Right ventricle myocardium inferior (tissue), 1 donor: ENCODE measurements at regions of chr17 and their contacts with region 1.

Region 1: DNA sequence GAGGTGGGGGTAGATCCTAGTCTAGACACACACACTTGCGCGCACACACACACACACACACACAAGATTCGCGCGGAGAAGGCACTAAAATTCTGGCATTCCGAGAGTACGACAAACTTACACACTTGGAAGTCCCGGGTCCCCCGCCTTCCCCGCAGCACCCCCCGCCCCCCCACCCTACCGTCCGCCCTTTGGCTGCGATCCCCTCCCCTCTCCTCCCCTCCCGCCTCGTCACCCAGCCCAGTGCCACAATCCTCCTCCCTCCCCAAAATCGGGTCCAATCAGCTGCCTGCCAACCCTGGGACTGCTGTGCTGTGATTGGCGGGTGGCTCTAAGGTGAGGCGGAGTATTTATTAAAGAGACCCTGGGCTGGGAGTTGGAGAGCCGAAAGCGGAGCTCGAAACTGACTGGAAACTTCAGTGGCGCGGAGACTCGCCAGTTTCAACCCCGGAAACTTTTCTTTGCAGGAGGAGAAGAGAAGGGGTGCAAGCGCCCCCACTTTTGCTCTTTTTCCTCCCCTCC is at the start of gene SOX9:
- DNase-seq: peak; percentile 90
- ATAC-seq: peak; percentile 93
- total RNA-seq, gene SOX9: 13.8 TPM

Region 2: DNA sequence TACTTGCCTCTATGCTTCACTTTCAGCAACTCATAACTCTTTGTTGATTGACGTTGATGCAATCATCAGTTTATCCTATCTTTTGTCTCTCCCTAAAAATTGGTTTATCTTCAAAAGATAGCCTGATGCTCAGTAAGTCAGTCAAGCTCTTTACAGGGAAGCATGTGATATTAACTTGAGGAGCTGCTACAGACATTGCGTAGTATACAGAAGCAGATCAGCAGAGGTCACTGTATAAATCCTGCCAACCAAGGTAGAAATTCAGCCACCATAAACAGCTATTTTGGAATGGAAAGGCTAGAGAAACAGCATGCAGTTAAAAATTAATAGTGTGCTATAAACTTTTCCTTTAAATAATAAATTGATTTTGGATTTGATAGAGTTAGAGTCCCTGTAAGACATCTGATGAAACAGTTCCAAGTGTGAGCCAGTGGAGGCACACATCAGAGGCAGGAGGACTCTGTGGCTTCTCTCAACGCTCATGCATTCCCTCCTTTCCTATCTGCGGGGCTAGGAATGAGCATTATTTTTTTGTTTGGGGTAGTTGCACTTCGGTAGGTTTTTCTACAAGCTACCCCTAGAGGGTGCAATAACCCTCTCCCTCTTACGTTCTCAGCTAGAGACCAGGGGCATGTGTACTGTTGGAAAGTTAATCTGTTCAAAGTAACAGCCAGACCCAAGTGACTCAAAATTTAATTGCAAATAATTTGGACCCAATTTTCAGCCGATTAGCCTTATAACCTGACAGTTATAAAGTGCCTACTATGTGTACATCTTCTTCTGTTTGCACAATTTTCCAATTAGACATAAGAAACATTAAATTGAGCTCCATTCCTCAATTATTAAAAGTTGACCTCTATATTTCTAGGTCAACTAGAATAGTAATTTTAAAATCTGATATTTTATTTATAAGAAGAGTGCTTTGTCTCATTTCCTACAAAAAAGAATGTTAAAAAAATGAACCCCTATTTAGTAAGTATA is 647.6 kb before region 1 on chr17:
- intact Hi-C with region 1: loop called (anchors 2 kb)
- DNase-seq: no peak
- ATAC-seq: peak; percentile 52

Region 3: DNA sequence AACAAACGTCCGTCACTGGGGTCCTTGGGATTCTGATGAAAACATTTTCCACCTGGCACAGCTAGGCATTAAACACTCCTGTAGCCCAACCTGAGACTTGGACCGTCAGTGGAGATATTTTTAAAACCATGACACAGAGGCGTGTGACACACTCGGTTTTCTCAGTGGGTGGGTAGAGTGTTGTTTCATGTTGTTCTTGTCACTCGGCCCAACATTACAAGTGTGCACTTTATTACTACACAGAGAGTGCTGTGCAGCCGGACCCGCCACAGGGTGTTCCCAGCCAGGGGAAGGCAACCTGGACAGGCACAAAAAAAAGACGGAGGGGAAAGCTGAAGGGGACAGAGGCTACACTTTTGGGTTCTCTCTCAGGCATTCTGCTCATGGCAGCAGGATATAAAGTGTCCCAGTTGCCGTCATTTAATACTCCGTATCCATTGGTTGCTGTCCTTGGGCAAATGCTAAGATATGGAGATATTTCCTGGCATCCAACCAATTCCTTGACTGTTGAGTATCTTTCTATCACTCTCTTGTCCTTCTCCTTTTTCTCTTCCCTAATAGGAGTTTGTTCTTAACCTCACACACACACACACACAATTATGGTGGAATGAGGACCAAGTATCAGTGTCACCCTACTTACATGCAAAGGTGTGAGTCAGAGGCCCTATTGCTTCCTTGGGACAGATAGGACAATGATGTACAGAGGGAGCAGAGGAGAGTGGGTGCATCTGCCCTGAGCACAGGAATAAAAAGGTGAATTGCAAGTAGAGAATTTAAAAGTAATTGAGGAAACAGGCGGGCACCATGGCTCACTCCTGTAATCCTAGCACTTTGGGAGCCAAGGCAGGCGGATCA is 154.0 kb before region 1 on chr17:
- intact Hi-C with region 1: loop called (anchors 2 kb)
- DNase-seq: no peak
- ATAC-seq: peak; percentile 79

Region 4: DNA sequence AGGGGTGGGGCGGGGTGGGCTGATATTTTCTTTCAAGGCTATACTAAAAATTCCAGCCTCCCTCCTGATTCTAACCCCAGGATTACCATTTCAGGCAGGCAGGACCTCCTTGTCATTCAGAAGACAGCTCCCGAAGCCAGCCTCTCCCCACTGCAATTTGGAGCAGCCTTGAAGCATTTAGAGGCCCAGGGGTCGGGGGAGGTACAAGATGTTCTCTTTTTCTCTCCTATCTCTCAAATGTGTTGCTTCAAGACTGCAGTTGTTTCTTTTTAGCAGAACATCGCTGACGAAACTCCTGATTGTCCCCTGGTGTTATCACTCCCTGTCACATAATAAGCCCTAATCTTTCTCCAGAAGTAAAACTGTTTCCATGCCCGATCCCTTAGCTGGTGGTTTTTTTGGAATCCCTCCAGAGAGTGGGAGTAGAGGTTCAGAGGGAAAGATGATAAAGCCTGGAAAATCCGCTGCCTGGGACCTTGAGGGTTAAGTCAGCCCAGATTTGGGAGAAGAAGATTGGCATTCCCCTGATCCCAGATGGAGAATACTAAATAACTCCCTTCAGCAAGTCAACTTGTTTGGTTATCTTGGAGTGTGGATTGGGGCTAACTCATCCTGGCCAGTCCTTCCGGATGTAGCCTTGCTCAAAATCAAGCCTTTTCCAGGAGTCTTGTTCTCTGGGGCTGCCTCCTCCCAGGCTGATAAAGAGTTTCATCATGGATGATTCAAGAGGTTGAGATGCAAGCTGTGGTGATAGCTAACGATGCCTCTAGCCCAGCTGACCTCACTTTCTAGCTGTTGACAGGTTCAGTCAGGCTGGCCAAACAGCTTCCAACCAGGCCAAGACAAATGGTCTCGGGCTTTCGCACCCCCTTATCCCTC is 71.5 kb after region 1 on chr17:
- intact Hi-C with region 1: loop called (anchors 1 kb)
- DNase-seq: no peak
- ATAC-seq: peak; percentile 88

Region 5: GRCh38 chr17:72419866-72420774 is 299.4 kb after region 1 on chr17:
- intact Hi-C with region 1: loop called (anchors 10 kb)
- DNase-seq: no peak
- ATAC-seq: no peak